ENCODE measurements at regions of chr10 and their contacts with region 1.

Region 1: GRCh38 chr10:110137142-110137545 is 70.3 kb upstream of the MXI1 start:
- DNase-seq: no peak
- H3K4me3 Mint-ChIP-seq: no peak overlapping the region
- H3K27ac Mint-ChIP-seq: peak overlapping the region; percentile 17
- H3K4me1 Mint-ChIP-seq: peaks cover 39% of the 10 kb centered on the region
- H3K27me3 Mint-ChIP-seq: no peaks in the 10 kb centered on the region

Region 2: GRCh38 chr10:109978481-109978880 is 158.7 kb before region 1 on chr10:
- CTCF ChIA-PET with region 1: interaction called, 4 read pairs
- intact Hi-C with region 1: loop called (anchors 1 kb)
- DNase-seq: peak; percentile 87
- H3K4me3 Mint-ChIP-seq: no peak overlapping the region
- H3K27ac Mint-ChIP-seq: no peak overlapping the region
- H3K4me1 Mint-ChIP-seq: peaks cover 14% of the 10 kb centered on the region
- H3K27me3 Mint-ChIP-seq: no peaks in the 10 kb centered on the region

Region 3: DNA sequence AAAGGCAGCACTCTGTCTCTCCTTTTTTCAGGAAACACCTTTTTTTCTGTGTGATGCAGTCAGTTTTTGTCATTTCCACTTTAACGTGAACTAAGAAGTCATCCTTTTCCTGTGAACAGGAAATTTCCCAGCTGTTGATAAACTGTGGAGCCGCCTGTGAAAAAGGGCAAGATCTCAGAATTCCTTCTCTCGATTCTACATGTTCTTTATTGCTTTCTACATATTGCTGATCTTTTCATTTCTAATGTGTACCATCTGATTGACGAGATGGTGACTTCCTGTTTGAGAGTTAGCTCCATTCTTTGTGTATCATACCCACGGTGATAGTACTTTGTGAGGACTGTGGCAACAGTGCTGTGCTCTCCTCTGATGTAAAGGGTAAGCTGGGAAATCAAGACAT is 78.9 kb before region 1 on chr10:
- CTCF ChIA-PET with region 1: no interaction called
- intact Hi-C with region 1: no loop called
- DNase-seq: no peak
- H3K4me3 Mint-ChIP-seq: peak overlapping the region; percentile 71
- H3K27ac Mint-ChIP-seq: peak overlapping the region; percentile 91
- H3K4me1 Mint-ChIP-seq: peaks cover 83% of the 10 kb centered on the region
- H3K27me3 Mint-ChIP-seq: no peaks in the 10 kb centered on the region

Region 4: DNA sequence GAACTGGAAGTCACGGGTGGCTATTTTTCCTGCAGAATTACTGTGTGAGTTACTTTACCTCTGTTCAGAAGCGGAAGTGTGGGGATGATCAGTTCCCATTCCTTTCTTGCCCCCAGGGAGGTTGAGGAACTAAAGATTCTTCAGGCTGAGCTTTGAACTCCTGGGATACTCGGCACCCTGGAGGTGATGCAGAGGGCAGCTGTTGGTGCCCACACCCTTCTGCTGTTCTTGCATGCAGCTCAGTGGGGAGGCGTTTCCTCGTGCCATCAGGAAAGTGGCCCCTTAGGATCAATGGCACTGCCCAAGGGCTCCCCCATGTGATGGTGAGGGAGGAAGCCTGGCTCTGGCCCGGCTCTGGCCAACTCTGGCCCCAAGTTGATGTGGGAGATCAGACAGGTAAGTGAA is 25.6 kb after region 1 on chr10:
- CTCF ChIA-PET with region 1: interaction called, 11 read pairs
- intact Hi-C with region 1: loop called (anchors 1 kb)
- DNase-seq: no peak
- H3K4me3 Mint-ChIP-seq: no peak overlapping the region
- H3K27ac Mint-ChIP-seq: no peak overlapping the region
- H3K4me1 Mint-ChIP-seq: peaks cover 3% of the 10 kb centered on the region
- H3K27me3 Mint-ChIP-seq: peaks cover 59% of the 10 kb centered on the region

Region 5: GRCh38 chr10:110225756-110226542 is 88.8 kb after region 1 on chr10:
- CTCF ChIA-PET with region 1: interaction called, 18 read pairs
- intact Hi-C with region 1: loop called (anchors 1 kb)
- DNase-seq: peak; percentile 93
- H3K4me3 Mint-ChIP-seq: peak overlapping the region; percentile 97
- H3K27ac Mint-ChIP-seq: peak overlapping the region; percentile 94
- H3K4me1 Mint-ChIP-seq: peaks cover 47% of the 10 kb centered on the region
- H3K27me3 Mint-ChIP-seq: no peaks in the 10 kb centered on the region

Region 6: DNA sequence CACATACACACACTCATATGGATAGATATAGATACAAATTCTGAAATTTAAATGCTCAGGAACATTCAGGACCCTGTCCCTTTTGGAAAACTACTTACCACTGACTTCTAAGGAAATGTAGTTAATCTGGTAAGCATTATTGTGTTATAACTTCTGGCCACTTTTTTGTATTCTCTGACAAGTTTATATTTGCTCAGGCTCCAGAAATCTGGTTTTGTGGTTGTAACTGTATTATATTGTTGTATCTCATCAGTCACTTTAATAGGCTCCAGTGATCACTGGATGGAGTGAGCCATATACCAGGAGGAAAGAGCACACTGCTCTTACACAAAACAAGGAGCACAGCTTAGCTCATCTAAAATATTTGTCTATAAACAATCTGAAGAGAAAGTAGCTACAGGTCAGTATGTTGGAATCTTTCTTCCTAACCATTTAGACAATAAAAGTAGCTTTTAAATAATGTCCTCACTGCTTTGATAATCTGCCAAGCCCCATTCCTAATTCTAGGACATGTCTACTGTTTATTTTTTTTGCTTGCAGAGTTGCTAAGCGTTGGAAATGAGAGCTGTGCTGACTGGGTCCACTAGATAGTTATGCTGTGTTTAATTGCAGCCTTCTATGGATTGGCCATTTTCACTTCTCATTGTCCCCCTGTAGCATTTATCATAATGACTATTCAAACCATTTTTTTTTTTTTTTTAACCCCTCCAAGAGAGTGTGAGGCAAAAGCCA is 123.8 kb after region 1 on chr10:
- CTCF ChIA-PET with region 1: no interaction called
- intact Hi-C with region 1: no loop called
- DNase-seq: no peak
- H3K4me3 Mint-ChIP-seq: no peak overlapping the region
- H3K27ac Mint-ChIP-seq: no peak overlapping the region
- H3K4me1 Mint-ChIP-seq: peaks cover 3% of the 10 kb centered on the region
- H3K27me3 Mint-ChIP-seq: no peaks in the 10 kb centered on the region

Region 7: GRCh38 chr10:110279407-110279986 is 142.4 kb after region 1 on chr10:
- CTCF ChIA-PET with region 1: interaction called, 36 read pairs
- intact Hi-C with region 1: loop called (anchors 1 kb)
- DNase-seq: peak; percentile 69
- H3K4me3 Mint-ChIP-seq: no peak overlapping the region
- H3K27ac Mint-ChIP-seq: no peak overlapping the region
- H3K4me1 Mint-ChIP-seq: peaks cover 18% of the 10 kb centered on the region
- H3K27me3 Mint-ChIP-seq: no peaks in the 10 kb centered on the region

Region 8: GRCh38 chr10:110497438-110498086 is 360.4 kb after region 1 on chr10 and contains the start of gene DUSP5:
- CTCF ChIA-PET with region 1: no interaction called
- intact Hi-C with region 1: loop called (anchors 2 kb)
- DNase-seq: peak; percentile 94
- H3K4me3 Mint-ChIP-seq: peak within 1 kb of the TSS; percentile 97
- H3K27ac Mint-ChIP-seq: peak within 1 kb of the TSS; percentile 94
- H3K4me1 Mint-ChIP-seq: peaks cover 43% of the 10 kb centered on the region
- H3K27me3 Mint-ChIP-seq: no peaks in the 10 kb centered on the region
- total RNA-seq, gene DUSP5: 51.0 to 53.5 TPM